Gastrocnemius medialis (tissue), 4 donors: ENCODE measurements at regions of chr1 and their contacts with region 1.

Region 1: DNA sequence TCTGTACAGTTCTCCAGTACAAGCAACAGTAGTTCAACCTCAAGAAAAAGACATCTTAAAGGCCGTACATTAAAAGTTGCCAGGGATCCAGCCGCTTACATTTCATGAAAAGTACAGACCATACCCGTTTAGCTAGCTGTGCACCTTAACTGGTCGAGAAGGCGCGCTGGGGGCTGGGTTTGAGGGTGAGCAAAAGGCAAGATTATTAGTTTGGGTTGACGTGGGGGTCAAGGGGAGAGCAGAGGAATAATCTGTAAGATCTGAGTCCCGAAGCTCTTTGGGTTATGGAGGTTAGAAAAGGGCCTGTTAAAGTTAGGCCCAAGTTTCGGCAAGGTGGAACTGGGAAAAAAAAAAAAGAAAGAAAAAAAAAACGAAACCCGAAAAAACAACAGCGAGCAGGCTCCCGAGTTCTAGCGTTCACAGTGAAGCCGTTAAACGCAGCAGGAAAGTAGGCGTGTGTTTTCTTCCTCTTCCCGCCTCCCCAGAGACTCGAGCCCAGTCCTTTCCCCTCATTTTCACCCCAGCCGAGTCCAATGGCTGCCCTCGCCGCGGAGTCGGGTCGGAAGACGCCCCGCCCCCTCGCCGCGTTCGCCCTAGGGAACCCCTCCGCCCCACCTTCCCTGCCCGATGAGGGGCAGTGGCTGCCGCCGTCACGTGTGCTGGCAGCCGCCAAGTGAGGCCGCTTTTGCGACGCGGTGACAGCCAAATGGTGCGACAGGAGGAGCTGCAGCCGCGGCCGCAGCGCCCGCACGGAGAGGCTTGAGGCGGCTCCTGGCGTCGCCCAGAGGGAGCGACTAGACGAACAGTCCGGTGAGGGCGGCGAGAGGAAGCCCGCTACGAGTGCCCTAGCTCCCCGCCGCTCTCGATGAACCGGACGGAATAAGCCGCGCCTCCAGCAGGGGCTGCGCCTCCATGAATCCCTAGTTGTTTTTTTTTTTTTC is at the start of gene PKN2:
- DNase-seq: peak; percentile 96 to 97
- ATAC-seq: peak; percentile 93 to 95
- H3K4me3 ChIP-seq: peak within 1 kb of the TSS; percentile 88 to 98 (median 92)
- H3K27ac ChIP-seq: peak within 1 kb of the TSS; percentile 91 to 97 (median 92)
- H3K4me1 ChIP-seq: peaks cover 30 to 32% of the 10 kb centered on the region in 2 donors
- H3K27me3 ChIP-seq: no peaks in the 10 kb centered on the region
- CTCF ChIP-seq: peak in 4 of 5 experiments; percentile 25 to 53 (median 38)
- POLR2A ChIP-seq: peak; percentile 81 to 86
- total RNA-seq, gene PKN2: 14.9 to 18.6 (median 17.0) TPM

Region 2: DNA sequence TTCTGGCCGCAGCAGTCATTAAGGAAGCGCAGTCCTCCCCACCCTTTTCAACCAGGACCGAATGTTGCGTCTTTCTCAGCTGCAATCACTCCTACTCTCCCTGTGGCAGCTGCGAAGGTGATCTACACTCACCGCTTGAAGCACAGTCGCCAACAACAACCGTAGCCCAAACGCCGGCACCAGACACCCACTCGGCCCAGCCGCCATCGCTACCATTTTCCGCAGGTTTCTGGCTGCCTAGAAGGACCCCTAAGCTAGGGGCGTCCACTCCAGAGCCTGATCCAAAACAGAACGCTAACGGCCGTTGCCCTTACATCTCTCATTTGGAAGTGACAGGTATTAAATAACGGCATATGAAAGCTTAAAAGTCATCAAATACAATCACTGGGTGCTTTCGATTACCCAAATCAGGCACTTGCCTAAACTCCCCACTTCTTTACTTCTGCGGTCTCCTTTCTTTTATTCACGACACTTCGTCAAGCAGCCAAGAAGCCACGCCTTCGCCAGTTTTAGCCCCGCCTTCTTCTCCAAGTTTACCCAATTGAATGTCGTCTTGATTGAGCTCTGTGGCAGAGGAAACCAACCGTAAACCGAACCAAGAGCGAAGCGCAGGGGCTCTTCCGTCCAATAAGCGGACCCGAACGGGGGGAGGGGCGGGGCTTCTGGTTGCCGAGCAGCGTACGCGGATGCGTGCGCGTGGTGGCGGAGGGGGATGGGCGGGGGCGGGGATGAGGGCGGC is 1769.7 kb before region 1 on chr1 and contains the start of gene SELENOF:
- in situ Hi-C with region 1: loop called in 1 of 4 experiments (anchors 25 kb)
- intact Hi-C with region 1: no loop called
- DNase-seq: peak; percentile 98 to 100
- ATAC-seq: peak; percentile 97 to 98
- H3K4me3 ChIP-seq: peak within 1 kb of the TSS; percentile 76 to 99 (median 88)
- H3K27ac ChIP-seq: peak within 1 kb of the TSS; percentile 86 to 97 (median 90)
- H3K4me1 ChIP-seq: peaks cover 19 to 40% of the 10 kb centered on the region in 2 donors
- H3K27me3 ChIP-seq: no peaks in the 10 kb centered on the region
- CTCF ChIP-seq: peak in 1 of 5 experiments; percentile 23
- POLR2A ChIP-seq: peak; percentile 18 to 86
- total RNA-seq, gene SELENOF: 41.3 to 66.8 (median 47.2) TPM

Region 3: DNA sequence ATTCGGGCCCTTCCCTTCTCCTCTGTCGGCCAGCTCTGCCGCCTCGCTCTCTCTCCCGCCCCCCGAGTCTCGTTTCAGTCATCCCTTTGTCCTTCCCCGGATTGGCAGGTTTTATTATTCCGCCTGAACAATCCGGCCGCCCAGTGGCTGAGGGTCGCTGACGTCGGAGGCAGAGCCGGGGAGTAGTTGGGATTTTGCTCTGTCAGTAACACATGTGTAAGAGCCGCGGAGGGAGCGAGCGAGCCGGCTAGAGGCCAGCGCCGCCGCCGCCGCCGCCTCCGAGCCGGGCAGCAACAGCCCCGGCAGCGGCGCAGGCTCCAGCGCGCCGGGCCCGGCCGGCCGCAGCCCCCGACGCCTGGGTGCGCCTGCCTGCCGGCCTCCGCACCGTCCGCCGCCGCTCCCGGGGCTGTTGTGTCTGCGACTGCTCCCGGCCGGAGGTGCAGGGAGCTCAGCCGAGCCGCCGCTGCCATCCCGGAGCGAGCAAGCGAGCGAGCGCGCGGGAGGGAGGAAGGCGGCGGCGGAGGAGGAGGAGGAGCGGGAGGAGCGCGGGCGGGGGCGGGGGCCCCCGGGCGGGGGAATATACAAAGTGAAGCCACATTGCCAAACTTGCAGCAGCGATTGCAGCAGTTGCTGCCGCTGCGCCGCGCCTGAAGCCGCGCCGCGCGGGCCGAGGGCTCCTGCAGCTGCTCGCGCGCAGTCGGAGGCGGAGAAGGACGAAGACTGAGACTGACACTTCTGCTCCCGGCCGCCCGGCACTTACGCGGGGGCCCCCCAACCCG is 1355.3 kb before region 1 on chr1 and contains the start of gene LMO4:
- in situ Hi-C with region 1: loop called in 1 of 4 experiments (anchors 25 kb)
- intact Hi-C with region 1: loop called (anchors 2 kb)
- DNase-seq: peak; percentile 97
- ATAC-seq: peak; percentile 84 to 85
- H3K4me3 ChIP-seq: peak within 1 kb of the TSS; percentile 73 to 97 (median 92)
- H3K27ac ChIP-seq: peak within 1 kb of the TSS; percentile 88 to 99 (median 97)
- H3K4me1 ChIP-seq: peaks cover 23 to 24% of the 10 kb centered on the region in 2 donors
- H3K27me3 ChIP-seq: no peaks in the 10 kb centered on the region
- CTCF ChIP-seq: no peak
- POLR2A ChIP-seq: peak; percentile 89 to 94
- total RNA-seq, gene LMO4: 29.6 to 47.3 (median 35.8) TPM

Region 4: DNA sequence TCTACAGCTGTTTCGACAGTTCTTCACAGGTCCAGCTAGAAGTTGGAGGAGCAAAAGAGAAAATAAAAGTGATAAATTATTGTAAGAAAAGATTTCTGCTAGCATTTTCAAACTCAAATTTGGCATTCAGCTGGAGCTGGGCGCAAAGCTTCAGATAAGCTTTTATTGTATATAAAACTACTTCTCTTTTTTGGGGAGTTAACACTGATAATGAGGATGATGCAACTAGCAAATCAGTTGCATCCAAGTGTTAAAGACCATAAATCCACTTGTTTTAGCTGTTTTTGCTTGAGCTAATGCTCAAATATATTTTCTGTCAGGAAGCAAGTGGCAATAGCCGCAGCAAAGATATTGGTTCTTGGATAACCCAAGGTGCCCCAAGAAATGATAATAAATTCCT is 126.8 kb before region 1 on chr1:
- in situ Hi-C with region 1: no loop called
- intact Hi-C with region 1: no loop called
- DNase-seq: no peak
- ATAC-seq: no peak
- H3K4me3 ChIP-seq: no peak overlapping the region
- H3K27ac ChIP-seq: no peak overlapping the region
- H3K4me1 ChIP-seq: no peaks in the 10 kb centered on the region
- H3K27me3 ChIP-seq: no peaks in the 10 kb centered on the region
- CTCF ChIP-seq: no peak
- POLR2A ChIP-seq: no peak

Region 5: GRCh38 chr1:88655685-88656299 is 28.0 kb before region 1 on chr1:
- in situ Hi-C with region 1: no loop called
- intact Hi-C with region 1: loop called (anchors 2 kb)
- DNase-seq: no peak
- ATAC-seq: no peak
- H3K4me3 ChIP-seq: no peak overlapping the region
- H3K27ac ChIP-seq: no peak overlapping the region
- H3K4me1 ChIP-seq: no peaks in the 10 kb centered on the region
- H3K27me3 ChIP-seq: no peaks in the 10 kb centered on the region
- CTCF ChIP-seq: peak; percentile 30 to 69 (median 61)
- POLR2A ChIP-seq: no peak

Region 6: GRCh38 chr1:88731475-88732269 is 47.9 kb after region 1 on chr1:
- in situ Hi-C with region 1: no loop called
- intact Hi-C with region 1: loop called (anchors 5 kb)
- DNase-seq: peak in 1 of 2 donors; percentile 39
- ATAC-seq: peak; percentile 89 to 93
- H3K4me3 ChIP-seq: peak overlapping the region in 1 of 4 donors; percentile 6
- H3K27ac ChIP-seq: peak overlapping the region; percentile 57 to 77 (median 64)
- H3K4me1 ChIP-seq: peaks cover 26 to 36% of the 10 kb centered on the region in 2 donors
- H3K27me3 ChIP-seq: no peaks in the 10 kb centered on the region
- CTCF ChIP-seq: no peak
- POLR2A ChIP-seq: no peak

Region 7: DNA sequence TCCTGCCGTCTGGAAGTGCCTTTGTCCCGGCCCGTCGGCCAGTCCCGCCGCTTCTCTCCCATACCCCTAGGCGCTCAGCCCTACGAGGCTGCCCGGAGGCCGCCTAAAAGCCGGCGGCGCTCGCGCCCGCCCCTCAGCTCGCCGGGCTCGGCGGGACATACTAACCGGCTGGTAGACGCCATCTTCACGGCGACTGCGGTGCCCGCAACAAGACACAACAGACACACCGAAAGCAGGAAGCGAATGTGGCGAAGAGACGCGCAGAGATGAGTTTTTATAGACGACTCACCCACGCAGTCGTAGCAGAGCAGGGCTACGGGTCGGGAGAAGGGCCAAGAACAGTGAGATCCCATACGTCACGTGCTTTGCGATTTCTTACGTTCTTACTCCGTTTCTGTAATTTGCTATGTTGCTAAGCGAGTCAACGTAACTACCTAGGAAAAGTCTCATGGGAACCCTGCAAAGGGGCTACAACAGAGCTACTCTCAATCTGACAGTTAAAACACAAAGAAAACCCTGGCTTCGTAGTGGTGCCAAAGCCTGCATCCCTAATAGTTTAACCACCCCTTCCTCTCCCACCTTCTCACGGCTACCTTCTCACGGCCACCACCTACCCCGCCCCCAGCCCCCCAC is 207.6 kb after region 1 on chr1 and contains the start of gene GTF2B:
- in situ Hi-C with region 1: loop called in 2 of 4 experiments (anchors 10 kb)
- intact Hi-C with region 1: loop called (anchors 1 kb)
- DNase-seq: peak; percentile 91 to 92
- ATAC-seq: peak; percentile 91 to 94
- H3K4me3 ChIP-seq: peak within 1 kb of the TSS; percentile 95 to 100 (median 98)
- H3K27ac ChIP-seq: peak within 1 kb of the TSS; percentile 92 to 99 (median 97)
- H3K4me1 ChIP-seq: peaks cover 23 to 28% of the 10 kb centered on the region in 2 donors
- H3K27me3 ChIP-seq: no peaks in the 10 kb centered on the region
- CTCF ChIP-seq: no peak
- POLR2A ChIP-seq: peak; percentile 86 to 87
- total RNA-seq, gene GTF2B: 20.2 to 30.3 (median 24.7) TPM